ENCODE measurements at regions of chr1 and their contacts with region 1.

Region 1: DNA sequence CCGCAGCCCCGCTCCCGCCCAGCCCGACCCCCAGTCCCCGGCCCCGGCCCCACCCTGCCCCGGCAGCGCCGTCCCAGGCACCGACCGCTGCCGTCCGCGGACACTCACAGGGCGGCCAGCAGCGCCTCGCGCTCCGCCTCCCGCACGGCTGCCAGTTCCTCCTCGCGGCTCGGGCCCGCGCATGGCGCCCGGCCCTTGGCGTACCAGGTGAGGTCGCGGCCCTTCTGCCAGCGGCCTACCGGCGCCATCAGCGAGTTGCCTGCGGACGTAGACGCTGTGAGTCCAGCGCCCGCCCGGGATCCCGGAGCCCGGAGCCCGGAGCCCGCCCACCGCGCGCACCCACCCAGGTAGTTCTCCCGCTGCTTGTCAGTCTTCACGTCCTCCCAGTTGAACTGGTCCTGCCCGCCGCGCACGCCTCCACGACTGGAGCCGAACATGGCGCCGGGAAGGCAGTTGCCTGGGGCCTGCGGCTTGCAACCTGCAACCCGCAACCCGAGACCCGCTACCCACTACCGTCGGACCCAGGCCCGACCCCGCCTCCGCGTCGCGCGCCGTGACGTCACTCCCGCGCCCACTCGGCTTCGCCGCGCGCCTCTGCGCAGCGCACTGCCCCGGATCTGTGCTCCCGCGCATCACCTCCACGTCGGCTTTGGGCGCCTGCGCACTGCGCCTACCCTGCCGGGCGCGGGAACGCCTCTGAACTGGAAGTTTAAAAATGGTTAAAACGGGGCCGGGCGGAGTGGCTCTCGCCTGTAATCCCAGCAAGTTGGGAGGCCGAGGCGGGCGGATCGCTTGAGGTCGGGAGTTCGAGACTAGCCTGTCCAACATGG is at the start of gene C1orf35:
- DNase-seq: peak; percentile 84 to 88 (median 86)
- H3K4me3 ChIP-seq: peak within 1 kb of the TSS; percentile 57 to 90 (median 72)
- H3K4me3 Mint-ChIP-seq: peak within 1 kb of the TSS; percentile 90 to 92
- H3K27ac ChIP-seq: peak within 1 kb of the TSS; percentile 78 to 87
- H3K27ac Mint-ChIP-seq: peak within 1 kb of the TSS; percentile 89 to 97 (median 94)
- H3K4me1 ChIP-seq: peaks cover 39 to 59% of the 10 kb centered on the region in 2 donors
- H3K4me1 Mint-ChIP-seq: peaks cover 42% of the 10 kb centered on the region
- H3K27me3 ChIP-seq: no peaks in the 10 kb centered on the region
- H3K27me3 Mint-ChIP-seq: peaks cover 0 to 4% (median 0%) of the 10 kb centered on the region in 3 donors
- CTCF ChIP-seq: no peak
- polyA plus RNA-seq, gene C1orf35: 6.9 to 34.2 (median 10.6) TPM

Region 2: GRCh38 chr1:227886993-227887696 is 215.9 kb before region 1 on chr1:
- intact Hi-C with region 1: no loop called
- DNase-seq: peak in 1 of 3 donors; percentile 1
- H3K4me3 ChIP-seq: peak overlapping the region; percentile 55 to 81 (median 71)
- H3K4me3 Mint-ChIP-seq: peak overlapping the region; percentile 72 to 84
- H3K27ac ChIP-seq: peak overlapping the region in 1 of 2 donors; percentile 64
- H3K27ac Mint-ChIP-seq: no peak overlapping the region
- H3K4me1 ChIP-seq: peaks cover 5 to 23% of the 10 kb centered on the region in 2 donors
- H3K4me1 Mint-ChIP-seq: peaks cover 12% of the 10 kb centered on the region
- H3K27me3 ChIP-seq: peaks cover 0 to 4% of the 10 kb centered on the region in 2 donors
- H3K27me3 Mint-ChIP-seq: peaks cover 2 to 4% (median 3%) of the 10 kb centered on the region in 3 donors
- CTCF ChIP-seq: no peak

Region 3: GRCh38 chr1:228031276-228031995 is 71.6 kb before region 1 on chr1:
- intact Hi-C with region 1: no loop called
- DNase-seq: no peak
- H3K4me3 ChIP-seq: no peak overlapping the region
- H3K4me3 Mint-ChIP-seq: no peak overlapping the region
- H3K27ac ChIP-seq: no peak overlapping the region
- H3K27ac Mint-ChIP-seq: no peak overlapping the region
- H3K4me1 ChIP-seq: no peaks in the 10 kb centered on the region
- H3K4me1 Mint-ChIP-seq: no peaks in the 10 kb centered on the region
- H3K27me3 ChIP-seq: peaks cover 0 to 12% of the 10 kb centered on the region in 2 donors
- H3K27me3 Mint-ChIP-seq: peaks cover 5 to 19% (median 10%) of the 10 kb centered on the region in 3 donors
- CTCF ChIP-seq: no peak

Region 4: GRCh38 chr1:228087771-228088251 is 15.2 kb before region 1 on chr1:
- intact Hi-C with region 1: loop called (anchors 2 kb)
- DNase-seq: peak; percentile 65 to 84 (median 72)
- H3K4me3 ChIP-seq: peak overlapping the region in 1 of 3 experiments; percentile 64
- H3K4me3 Mint-ChIP-seq: peak overlapping the region; percentile 44 to 87
- H3K27ac ChIP-seq: peak overlapping the region; percentile 94 to 95
- H3K27ac Mint-ChIP-seq: peak overlapping the region; percentile 96 to 100 (median 99)
- H3K4me1 ChIP-seq: peaks cover 86 to 89% of the 10 kb centered on the region in 2 donors
- H3K4me1 Mint-ChIP-seq: peaks cover 88% of the 10 kb centered on the region
- H3K27me3 ChIP-seq: no peaks in the 10 kb centered on the region
- H3K27me3 Mint-ChIP-seq: peaks cover 0 to 5% (median 1%) of the 10 kb centered on the region in 3 donors
- CTCF ChIP-seq: no peak

Region 5: GRCh38 chr1:228131766-228132165 is 28.8 kb after region 1 on chr1:
- intact Hi-C with region 1: no loop called
- DNase-seq: no peak
- H3K4me3 ChIP-seq: no peak overlapping the region
- H3K4me3 Mint-ChIP-seq: no peak overlapping the region
- H3K27ac ChIP-seq: no peak overlapping the region
- H3K27ac Mint-ChIP-seq: no peak overlapping the region
- H3K4me1 ChIP-seq: peaks cover 10 to 14% of the 10 kb centered on the region in 2 donors
- H3K4me1 Mint-ChIP-seq: peaks cover 20% of the 10 kb centered on the region
- H3K27me3 ChIP-seq: no peaks in the 10 kb centered on the region
- H3K27me3 Mint-ChIP-seq: peaks cover 8 to 12% (median 11%) of the 10 kb centered on the region in 3 donors
- CTCF ChIP-seq: no peak

Measured in CD14-positive monocyte (primary cell).